B cell (primary cell): ENCODE measurements at regions of chr14 and their contacts with region 1.

Region 1: GRCh38 chr14:73295198-73295796 is 58.0 kb downstream of the PAPLN start:
- DNase-seq: peak; percentile 72
- ATAC-seq: peak; percentile 53
- H3K4me3 ChIP-seq: no peak overlapping the region
- H3K4me3 Mint-ChIP-seq: no peak overlapping the region
- H3K27ac ChIP-seq: no peak overlapping the region
- H3K27ac Mint-ChIP-seq: no peak overlapping the region
- H3K4me1 ChIP-seq: no peaks in the 10 kb centered on the region
- H3K4me1 Mint-ChIP-seq: peaks cover 5% of the 10 kb centered on the region
- H3K27me3 ChIP-seq: no peaks in the 10 kb centered on the region
- H3K27me3 Mint-ChIP-seq: no peaks in the 10 kb centered on the region
- CTCF ChIP-seq: peak; percentile 89

Region 2: GRCh38 chr14:73305499-73305898 is 10.2 kb after region 1 on chr14:
- CTCF ChIA-PET with region 1: interaction called, 17 read pairs
- POLR2A ChIA-PET with region 1: no interaction called
- intact Hi-C with region 1: no loop called
- DNase-seq: no peak
- ATAC-seq: no peak
- H3K4me3 ChIP-seq: no peak overlapping the region
- H3K4me3 Mint-ChIP-seq: no peak overlapping the region
- H3K27ac ChIP-seq: no peak overlapping the region
- H3K27ac Mint-ChIP-seq: peak overlapping the region; percentile 13
- H3K4me1 ChIP-seq: peaks cover 12 to 19% of the 10 kb centered on the region in 2 donors
- H3K4me1 Mint-ChIP-seq: peaks cover 27% of the 10 kb centered on the region
- H3K27me3 ChIP-seq: no peaks in the 10 kb centered on the region
- H3K27me3 Mint-ChIP-seq: no peaks in the 10 kb centered on the region
- CTCF ChIP-seq: no peak

Region 3: DNA sequence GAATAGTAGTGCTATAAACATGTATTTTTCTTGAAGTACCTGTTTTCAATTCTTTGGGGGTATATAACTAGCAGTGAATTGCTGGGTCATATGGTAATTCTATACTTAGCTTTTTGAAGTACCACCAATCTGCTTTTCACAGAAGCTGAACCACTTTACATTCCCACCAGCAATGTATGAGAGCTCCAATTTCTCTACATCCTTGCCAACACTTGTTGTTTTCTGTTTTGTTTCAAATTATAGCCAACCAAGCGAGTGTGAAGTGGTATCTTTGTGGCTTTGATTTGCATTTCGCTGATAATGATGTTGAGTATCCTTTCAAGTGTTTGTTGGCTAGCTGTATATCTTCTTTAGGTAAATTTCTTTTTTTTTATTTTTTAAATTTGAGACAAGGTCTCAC is 37.7 kb after region 1 on chr14:
- CTCF ChIA-PET with region 1: interaction called, 11 read pairs
- POLR2A ChIA-PET with region 1: no interaction called
- intact Hi-C with region 1: no loop called
- DNase-seq: no peak
- ATAC-seq: no peak
- H3K4me3 ChIP-seq: no peak overlapping the region
- H3K4me3 Mint-ChIP-seq: no peak overlapping the region
- H3K27ac ChIP-seq: no peak overlapping the region
- H3K27ac Mint-ChIP-seq: no peak overlapping the region
- H3K4me1 ChIP-seq: peaks cover 0 to 5% of the 10 kb centered on the region in 2 donors
- H3K4me1 Mint-ChIP-seq: peaks cover 10% of the 10 kb centered on the region
- H3K27me3 ChIP-seq: no peaks in the 10 kb centered on the region
- H3K27me3 Mint-ChIP-seq: no peaks in the 10 kb centered on the region
- CTCF ChIP-seq: no peak

Region 4: DNA sequence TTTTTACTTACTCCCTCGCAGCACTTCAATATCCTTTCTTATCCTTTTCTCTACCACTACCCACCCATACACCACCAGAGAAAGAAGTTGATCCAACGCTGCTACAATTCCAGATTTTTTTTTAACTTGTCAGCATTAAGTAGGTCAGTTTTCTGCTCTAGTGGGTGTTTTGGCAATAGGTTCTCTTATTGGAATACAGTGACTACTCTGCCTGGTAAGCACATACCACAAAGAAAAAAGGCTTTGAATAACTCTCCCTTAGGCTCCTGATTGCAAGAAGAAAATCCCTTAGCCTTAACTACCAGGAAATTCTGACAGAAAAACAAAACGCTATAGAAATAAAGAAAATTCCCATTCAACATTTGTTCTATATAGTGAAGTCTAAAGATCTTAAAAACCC is 91.0 kb after region 1 on chr14:
- CTCF ChIA-PET with region 1: interaction called, 10 read pairs
- POLR2A ChIA-PET with region 1: no interaction called
- intact Hi-C with region 1: no loop called
- DNase-seq: no peak
- ATAC-seq: no peak
- H3K4me3 ChIP-seq: no peak overlapping the region
- H3K4me3 Mint-ChIP-seq: no peak overlapping the region
- H3K27ac ChIP-seq: no peak overlapping the region
- H3K27ac Mint-ChIP-seq: no peak overlapping the region
- H3K4me1 ChIP-seq: peaks cover 9 to 25% of the 10 kb centered on the region in 2 donors
- H3K4me1 Mint-ChIP-seq: peaks cover 41% of the 10 kb centered on the region
- H3K27me3 ChIP-seq: no peaks in the 10 kb centered on the region
- H3K27me3 Mint-ChIP-seq: no peaks in the 10 kb centered on the region
- CTCF ChIP-seq: no peak

Region 5: GRCh38 chr14:73403181-73403752 is 108.0 kb after region 1 on chr14:
- CTCF ChIA-PET with region 1: interaction called, 24 read pairs
- POLR2A ChIA-PET with region 1: no interaction called
- intact Hi-C with region 1: no loop called
- DNase-seq: no peak
- ATAC-seq: no peak
- H3K4me3 ChIP-seq: no peak overlapping the region
- H3K4me3 Mint-ChIP-seq: no peak overlapping the region
- H3K27ac ChIP-seq: peak overlapping the region; percentile 70 to 78
- H3K27ac Mint-ChIP-seq: peak overlapping the region; percentile 89
- H3K4me1 ChIP-seq: peaks cover 32 to 44% of the 10 kb centered on the region in 2 donors
- H3K4me1 Mint-ChIP-seq: peaks cover 50% of the 10 kb centered on the region
- H3K27me3 ChIP-seq: no peaks in the 10 kb centered on the region
- H3K27me3 Mint-ChIP-seq: no peaks in the 10 kb centered on the region
- CTCF ChIP-seq: no peak

Region 6: GRCh38 chr14:73472185-73473114 is 177.2 kb after region 1 on chr14:
- CTCF ChIA-PET with region 1: interaction called, 470 read pairs
- POLR2A ChIA-PET with region 1: interaction called, 6 read pairs
- intact Hi-C with region 1: loop called (anchors 1 kb)
- DNase-seq: peak; percentile 81
- ATAC-seq: peak; percentile 93
- H3K4me3 ChIP-seq: no peak overlapping the region
- H3K4me3 Mint-ChIP-seq: no peak overlapping the region
- H3K27ac ChIP-seq: no peak overlapping the region
- H3K27ac Mint-ChIP-seq: no peak overlapping the region
- H3K4me1 ChIP-seq: peaks cover 0 to 2% of the 10 kb centered on the region in 2 donors
- H3K4me1 Mint-ChIP-seq: peaks cover 3% of the 10 kb centered on the region
- H3K27me3 ChIP-seq: no peaks in the 10 kb centered on the region
- H3K27me3 Mint-ChIP-seq: no peaks in the 10 kb centered on the region
- CTCF ChIP-seq: peak; percentile 80